ENCODE measurements at regions of chr3 and their contacts with region 1.

Region 1: GRCh38 chr3:39288300-39288808 is 8.5 kb upstream of the CX3CR1 start:
- DNase-seq: peak; percentile 71 to 79
- H3K4me3 ChIP-seq: no peak overlapping the region
- H3K27ac ChIP-seq: no peak overlapping the region
- H3K4me1 ChIP-seq: no peaks in the 10 kb centered on the region
- H3K27me3 ChIP-seq: no peaks in the 10 kb centered on the region
- CTCF ChIP-seq: peak; percentile 84 to 90

Region 2: DNA sequence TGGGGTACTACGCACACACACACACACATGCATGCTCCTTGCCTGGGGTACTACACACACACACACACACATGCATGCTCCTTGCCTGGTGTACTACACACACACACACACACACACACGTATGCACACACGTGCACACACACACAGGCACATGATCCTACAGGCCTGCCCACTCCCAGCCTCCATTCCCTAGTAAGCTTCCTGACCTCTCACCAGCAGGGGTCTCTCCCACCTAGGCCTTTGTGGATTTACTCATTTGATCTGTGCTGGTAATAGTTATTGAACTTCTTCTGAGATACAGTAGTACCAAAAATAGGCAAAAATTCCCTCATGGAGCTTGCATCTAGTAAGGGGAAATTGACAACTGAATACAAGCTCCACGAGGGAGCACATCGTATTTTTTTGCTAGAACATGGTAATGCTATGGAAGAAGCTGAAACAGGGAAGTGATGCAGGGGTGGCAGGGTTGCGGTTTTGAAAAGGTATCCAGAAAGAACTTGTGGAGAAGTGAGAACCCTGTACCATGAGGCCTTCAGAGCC is 161.8 kb before region 1 on chr3:
- intact Hi-C with region 1: loop called (anchors 2 kb)
- DNase-seq: no peak
- H3K4me3 ChIP-seq: no peak overlapping the region
- H3K27ac ChIP-seq: no peak overlapping the region
- H3K4me1 ChIP-seq: peaks cover 0 to 17% (median 13%) of the 10 kb centered on the region in 4 donors
- H3K27me3 ChIP-seq: no peaks in the 10 kb centered on the region
- CTCF ChIP-seq: peak; percentile 59 to 72

Region 3: GRCh38 chr3:39208463-39209055 is 79.8 kb before region 1 on chr3:
- intact Hi-C with region 1: loop called (anchors 5 kb)
- DNase-seq: peak in 1 of 2 donors; percentile 53
- H3K4me3 ChIP-seq: no peak overlapping the region
- H3K27ac ChIP-seq: no peak overlapping the region
- H3K4me1 ChIP-seq: no peaks in the 10 kb centered on the region
- H3K27me3 ChIP-seq: no peaks in the 10 kb centered on the region
- CTCF ChIP-seq: peak; percentile 39 to 52

Measured in tibial artery (tissue), 4 donors.